CD14-positive monocyte (primary cell): ENCODE measurements at regions of chr6 and their contacts with region 1.

Region 1: GRCh38 chr6:139690007-139690406 is 315.6 kb upstream of the CITED2 start:
- DNase-seq: no peak
- H3K4me3 ChIP-seq: no peak overlapping the region
- H3K4me3 Mint-ChIP-seq: no peak overlapping the region
- H3K27ac ChIP-seq: peak overlapping the region in 1 of 2 donors; percentile 5
- H3K27ac Mint-ChIP-seq: peak overlapping the region in 1 of 7 donors; percentile 7
- H3K4me1 ChIP-seq: peaks cover 11 to 12% of the 10 kb centered on the region in 2 donors
- H3K4me1 Mint-ChIP-seq: peaks cover 36% of the 10 kb centered on the region
- H3K27me3 ChIP-seq: no peaks in the 10 kb centered on the region
- H3K27me3 Mint-ChIP-seq: peaks cover 0 to 1% (median 0%) of the 10 kb centered on the region in 3 donors
- CTCF ChIP-seq: no peak

Region 2: GRCh38 chr6:139448051-139448649 is 241.9 kb before region 1 on chr6:
- intact Hi-C with region 1: no loop called
- DNase-seq: no peak
- H3K4me3 ChIP-seq: no peak overlapping the region
- H3K4me3 Mint-ChIP-seq: no peak overlapping the region
- H3K27ac ChIP-seq: no peak overlapping the region
- H3K27ac Mint-ChIP-seq: no peak overlapping the region
- H3K4me1 ChIP-seq: peaks cover 20 to 46% of the 10 kb centered on the region in 2 donors
- H3K4me1 Mint-ChIP-seq: peaks cover 49% of the 10 kb centered on the region
- H3K27me3 ChIP-seq: no peaks in the 10 kb centered on the region
- H3K27me3 Mint-ChIP-seq: peaks cover 0 to 2% (median 0%) of the 10 kb centered on the region in 3 donors
- CTCF ChIP-seq: no peak

Region 3: DNA sequence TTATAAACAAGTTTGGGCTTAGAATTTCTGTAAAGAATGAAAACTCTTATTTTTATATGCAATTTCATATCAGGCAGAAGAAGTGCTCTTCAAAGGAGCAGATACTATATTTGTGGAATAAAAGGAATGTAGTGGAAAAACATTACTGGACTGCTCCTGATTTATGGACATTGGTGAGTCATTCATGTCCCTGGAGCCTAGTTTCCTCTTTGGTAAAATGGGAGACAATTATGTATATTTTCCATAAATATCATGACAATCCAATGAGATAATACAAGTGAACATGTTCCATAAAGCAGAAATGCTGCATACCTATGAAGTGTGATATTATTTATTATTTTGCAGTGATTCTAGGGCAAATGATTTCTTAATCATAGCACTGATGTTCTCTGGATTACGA is 130.2 kb after region 1 on chr6:
- intact Hi-C with region 1: loop called in 1 of 2 experiments (anchors 5 kb)
- DNase-seq: no peak
- H3K4me3 ChIP-seq: no peak overlapping the region
- H3K4me3 Mint-ChIP-seq: no peak overlapping the region
- H3K27ac ChIP-seq: no peak overlapping the region
- H3K27ac Mint-ChIP-seq: no peak overlapping the region
- H3K4me1 ChIP-seq: no peaks in the 10 kb centered on the region
- H3K4me1 Mint-ChIP-seq: peaks cover 6% of the 10 kb centered on the region
- H3K27me3 ChIP-seq: no peaks in the 10 kb centered on the region
- H3K27me3 Mint-ChIP-seq: no peaks in the 10 kb centered on the region
- CTCF ChIP-seq: no peak